ENCODE measurements at regions of chr4 and their contacts with region 1.

Region 1: GRCh38 chr4:41454423-41454822 is 83.5 kb upstream of the LIMCH1 start:
- DNase-seq: no peak
- ATAC-seq: peak; percentile 49 to 67 (median 63)
- H3K4me3 ChIP-seq: no peak overlapping the region
- H3K27ac ChIP-seq: no peak overlapping the region
- H3K4me1 ChIP-seq: peaks cover 0 to 60% (median 32%) of the 10 kb centered on the region in 12 donors
- H3K27me3 ChIP-seq: no peaks in the 10 kb centered on the region
- CTCF ChIP-seq: no peak
- POLR2A ChIP-seq: no peak

Region 2: GRCh38 chr4:41280010-41280409 is 174.4 kb before region 1 on chr4:
- intact Hi-C with region 1: no loop called
- DNase-seq: no peak
- ATAC-seq: peak in 2 of 4 donors; percentile 18 to 41
- H3K4me3 ChIP-seq: no peak overlapping the region
- H3K27ac ChIP-seq: no peak overlapping the region
- H3K4me1 ChIP-seq: peaks cover 0 to 7% (median 0%) of the 10 kb centered on the region in 12 donors
- H3K27me3 ChIP-seq: peaks cover 0 to 4% (median 0%) of the 10 kb centered on the region in 9 donors
- CTCF ChIP-seq: no peak
- POLR2A ChIP-seq: no peak

Region 3: DNA sequence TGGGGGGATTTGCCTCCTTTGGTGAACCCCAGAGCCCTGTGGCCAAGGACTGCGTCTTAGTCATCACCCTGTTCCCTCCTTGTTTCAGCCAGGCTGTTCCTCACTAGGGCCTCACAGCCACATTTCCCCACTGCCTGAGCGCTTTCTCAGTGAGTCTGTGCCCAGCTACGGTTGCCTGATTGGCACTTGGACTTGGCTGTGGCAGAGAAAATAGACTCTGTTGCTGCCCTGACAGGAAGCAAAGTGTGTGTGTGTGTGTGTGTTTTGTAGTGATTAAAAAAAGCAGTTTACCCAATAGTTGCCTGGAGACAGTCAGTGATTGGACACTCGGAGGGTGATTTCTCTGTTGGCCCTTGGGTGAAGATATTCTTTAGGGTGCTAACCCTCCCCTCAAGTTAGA is 84.7 kb before region 1 on chr4:
- intact Hi-C with region 1: no loop called
- DNase-seq: peak in 4 of 5 donors; percentile 65 to 83 (median 71)
- ATAC-seq: peak; percentile 84 to 94 (median 92)
- H3K4me3 ChIP-seq: peak overlapping the region in 1 of 12 donors; percentile 24
- H3K27ac ChIP-seq: peak overlapping the region in 9 of 12 donors; percentile 38 to 85 (median 65)
- H3K4me1 ChIP-seq: peaks cover 0 to 95% (median 54%) of the 10 kb centered on the region in 12 donors
- H3K27me3 ChIP-seq: no peaks in the 10 kb centered on the region
- CTCF ChIP-seq: no peak
- POLR2A ChIP-seq: no peak

Region 4: GRCh38 chr4:41505161-41505661 is 50.8 kb after region 1 on chr4:
- intact Hi-C with region 1: loop called in 1 of 10 experiments (anchors 10 kb)
- DNase-seq: peak in 3 of 5 donors; percentile 20 to 55 (median 37)
- ATAC-seq: peak; percentile 79 to 90 (median 84)
- H3K4me3 ChIP-seq: no peak overlapping the region
- H3K27ac ChIP-seq: peak overlapping the region in 6 of 12 donors; percentile 17 to 72 (median 51)
- H3K4me1 ChIP-seq: peaks cover 0 to 53% (median 28%) of the 10 kb centered on the region in 12 donors
- H3K27me3 ChIP-seq: no peaks in the 10 kb centered on the region
- CTCF ChIP-seq: no peak
- POLR2A ChIP-seq: no peak